Mammary epithelial cell (primary cell): ENCODE measurements at regions of chr19 and their contacts with region 1.

Region 1: GRCh38 chr19:55206664-55207500 is 2.4 kb downstream of the PTPRH start:
- DNase-seq: peak; percentile 85
- H3K4me3 ChIP-seq: peak overlapping the region in 1 of 3 experiments; percentile 36
- H3K27ac ChIP-seq: peak overlapping the region; percentile 40
- H3K4me1 ChIP-seq: peaks cover 28% of the 10 kb centered on the region
- H3K27me3 ChIP-seq: no peaks in the 10 kb centered on the region
- CTCF ChIP-seq: no peak

Region 2: DNA sequence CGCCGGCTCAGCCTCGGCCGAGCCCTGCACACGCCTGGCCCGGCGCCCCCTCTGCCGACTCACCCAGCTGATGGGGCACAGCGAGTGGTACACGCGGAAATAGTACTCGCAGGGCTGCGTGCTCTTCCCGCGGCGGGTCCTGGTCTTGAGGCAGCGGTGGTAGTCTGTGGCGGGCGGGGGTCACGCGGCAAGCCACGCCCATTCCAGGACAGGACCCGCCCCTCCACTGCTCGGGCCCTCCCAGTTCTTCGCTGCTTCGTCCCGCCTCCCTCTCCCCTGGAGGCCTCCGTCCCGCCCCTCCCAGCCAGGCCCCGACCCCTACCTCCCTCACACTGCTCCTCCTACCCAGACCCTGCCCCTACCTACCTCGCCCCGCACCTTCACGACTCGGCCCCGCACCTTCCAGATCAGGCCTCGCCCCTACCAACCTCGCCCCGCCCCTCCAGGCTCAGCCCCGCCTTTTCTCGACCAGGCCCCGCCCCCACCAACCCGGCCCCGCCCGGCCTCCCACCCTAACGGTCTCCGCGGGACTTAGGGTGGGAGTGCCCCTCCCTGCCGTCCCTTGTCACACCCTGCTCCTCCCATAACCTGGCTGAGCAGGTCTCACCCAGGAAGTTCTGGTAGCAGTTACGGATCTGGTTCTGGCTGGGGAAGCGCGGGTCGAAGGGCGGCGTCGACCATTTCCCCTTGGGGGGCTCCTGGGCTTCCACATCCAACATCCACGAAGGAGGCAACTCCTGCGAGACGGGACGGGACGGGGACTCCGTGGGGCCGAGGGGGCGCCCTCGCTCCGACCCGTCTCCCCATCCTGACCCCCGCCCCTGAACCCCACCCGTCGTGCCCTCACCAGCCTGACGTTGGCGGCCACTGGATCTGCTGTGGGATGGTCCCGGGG is 147.2 kb after region 1 on chr19:
- CTCF ChIA-PET with region 1: interaction called, 13 read pairs
- dilution Hi-C with region 1: loop called (anchors 5 kb)
- in situ Hi-C with region 1: no loop called
- intact Hi-C with region 1: no loop called
- DNase-seq: peak; percentile 60
- H3K4me3 ChIP-seq: peak overlapping the region; percentile 47 to 59 (median 48)
- H3K27ac ChIP-seq: no peak overlapping the region
- H3K4me1 ChIP-seq: peaks cover 30% of the 10 kb centered on the region
- H3K27me3 ChIP-seq: no peaks in the 10 kb centered on the region
- CTCF ChIP-seq: no peak

Region 3: GRCh38 chr19:55369671-55370304 is 162.9 kb after region 1 on chr19:
- CTCF ChIA-PET with region 1: no interaction called
- dilution Hi-C with region 1: no loop called
- in situ Hi-C with region 1: no loop called
- intact Hi-C with region 1: no loop called
- DNase-seq: peak; percentile 50
- H3K4me3 ChIP-seq: peak overlapping the region; percentile 28 to 66 (median 62)
- H3K27ac ChIP-seq: peak overlapping the region; percentile 0
- H3K4me1 ChIP-seq: peaks cover 29% of the 10 kb centered on the region
- H3K27me3 ChIP-seq: no peaks in the 10 kb centered on the region
- CTCF ChIP-seq: no peak